ENCODE measurements at regions of chr19 and their contacts with region 1.

Region 1: GRCh38 chr19:8580710-8581281 is 3.6 kb upstream of the MYO1F start:
- DNase-seq: peak; percentile 81
- ATAC-seq: peak; percentile 73
- H3K4me3 Mint-ChIP-seq: no peak overlapping the region
- H3K27ac Mint-ChIP-seq: no peak overlapping the region
- H3K4me1 Mint-ChIP-seq: peaks cover 35% of the 10 kb centered on the region
- H3K27me3 Mint-ChIP-seq: peaks cover 2% of the 10 kb centered on the region
- CTCF ChIP-seq: peak; percentile 95

Region 2: DNA sequence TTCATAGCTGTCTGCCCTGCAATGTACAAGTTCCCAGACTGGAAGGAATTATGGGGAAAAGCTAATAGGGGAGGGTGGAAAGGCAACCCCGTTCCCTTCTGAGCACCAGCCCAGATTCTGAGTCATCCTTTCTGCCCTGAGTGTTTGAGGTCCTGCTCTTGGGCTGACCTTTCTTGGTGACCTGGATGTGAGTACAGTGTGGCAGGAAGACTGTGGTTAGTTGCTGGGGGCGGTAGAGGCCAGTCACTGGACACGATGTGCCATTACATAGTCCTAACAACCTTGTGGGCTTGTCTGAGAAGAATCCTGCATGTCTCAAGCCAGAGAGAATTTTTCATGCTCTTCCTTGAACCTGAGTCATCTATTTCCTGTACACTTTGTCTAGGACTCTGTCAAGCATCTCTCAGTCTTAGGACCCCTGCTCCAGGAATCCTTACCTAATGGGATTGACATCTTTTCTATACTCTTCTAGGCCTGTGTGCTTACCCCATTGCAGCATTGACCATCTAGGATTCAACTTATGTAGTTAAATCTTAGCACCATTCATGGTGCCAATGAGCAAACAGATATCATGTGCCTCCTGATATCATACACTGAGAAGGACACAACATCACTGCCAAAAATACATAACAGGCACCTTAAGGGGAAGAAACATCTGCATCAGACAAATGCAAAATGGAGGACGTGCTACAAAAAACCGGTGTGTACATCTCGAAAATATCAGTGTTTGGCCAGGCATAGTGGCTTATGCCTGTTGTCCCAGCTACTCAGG is 225.0 kb before region 1 on chr19:
- CTCF ChIA-PET with region 1: interaction called, 18 read pairs
- POLR2A ChIA-PET with region 1: no interaction called
- intact Hi-C with region 1: loop called (anchors 2 kb)
- DNase-seq: no peak
- ATAC-seq: no peak
- H3K4me3 Mint-ChIP-seq: no peak overlapping the region
- H3K27ac Mint-ChIP-seq: no peak overlapping the region
- H3K4me1 Mint-ChIP-seq: peaks cover 3% of the 10 kb centered on the region
- H3K27me3 Mint-ChIP-seq: peaks cover 14% of the 10 kb centered on the region
- CTCF ChIP-seq: no peak

Region 3: GRCh38 chr19:8526345-8527067 is 54.3 kb before region 1 on chr19:
- CTCF ChIA-PET with region 1: interaction called, 4 read pairs
- POLR2A ChIA-PET with region 1: interaction called, 12 read pairs
- intact Hi-C with region 1: no loop called
- DNase-seq: peak; percentile 43
- ATAC-seq: peak; percentile 55
- H3K4me3 Mint-ChIP-seq: peak overlapping the region; percentile 9
- H3K27ac Mint-ChIP-seq: no peak overlapping the region
- H3K4me1 Mint-ChIP-seq: no peaks in the 10 kb centered on the region
- H3K27me3 Mint-ChIP-seq: no peaks in the 10 kb centered on the region
- CTCF ChIP-seq: no peak

Region 4: DNA sequence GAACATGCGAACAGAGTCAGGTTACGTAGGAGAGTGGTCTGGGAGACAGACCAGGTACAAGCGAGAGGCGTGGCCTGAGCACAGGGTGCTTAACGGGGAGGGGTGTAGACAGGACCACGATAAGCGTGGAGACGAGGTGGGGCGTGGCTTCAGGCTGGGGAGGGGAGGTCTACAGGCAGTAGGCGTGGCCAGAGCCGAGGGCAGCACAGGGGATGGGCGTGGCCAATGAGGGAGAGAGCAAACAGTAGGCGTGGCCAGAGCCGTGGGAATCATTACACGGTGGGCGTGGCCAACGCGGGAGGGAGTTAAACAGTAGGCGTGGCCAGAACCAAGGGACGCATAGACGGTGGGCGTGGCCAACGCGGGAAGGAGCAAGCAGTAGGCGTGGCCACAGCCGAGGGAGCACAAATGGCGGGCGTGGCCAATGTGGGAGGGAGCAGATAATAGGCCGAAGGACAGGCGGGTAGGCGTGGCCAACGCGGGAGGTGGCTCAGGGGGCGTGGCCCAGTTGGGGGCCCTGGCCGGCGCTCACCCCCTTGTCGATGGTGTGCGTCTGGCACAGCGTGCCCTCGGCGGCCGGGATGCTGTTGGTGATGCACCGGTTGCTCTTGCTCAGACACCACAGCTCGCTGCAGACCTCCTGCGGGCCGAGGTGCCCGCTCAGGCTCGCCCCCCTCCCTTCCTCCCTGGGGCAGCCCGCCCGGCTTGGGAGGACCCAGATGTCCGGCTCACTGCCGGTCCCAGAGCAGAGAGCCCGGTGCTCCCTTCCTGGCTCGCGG is 11.6 kb after region 1 on chr19:
- CTCF ChIA-PET with region 1: interaction called, 28 read pairs
- POLR2A ChIA-PET with region 1: interaction called, 3 read pairs
- intact Hi-C with region 1: no loop called
- DNase-seq: peak; percentile 51
- ATAC-seq: peak; percentile 86
- H3K4me3 Mint-ChIP-seq: peak overlapping the region; percentile 66
- H3K27ac Mint-ChIP-seq: no peak overlapping the region
- H3K4me1 Mint-ChIP-seq: peaks cover 15% of the 10 kb centered on the region
- H3K27me3 Mint-ChIP-seq: peaks cover 43% of the 10 kb centered on the region
- CTCF ChIP-seq: no peak

Region 5: DNA sequence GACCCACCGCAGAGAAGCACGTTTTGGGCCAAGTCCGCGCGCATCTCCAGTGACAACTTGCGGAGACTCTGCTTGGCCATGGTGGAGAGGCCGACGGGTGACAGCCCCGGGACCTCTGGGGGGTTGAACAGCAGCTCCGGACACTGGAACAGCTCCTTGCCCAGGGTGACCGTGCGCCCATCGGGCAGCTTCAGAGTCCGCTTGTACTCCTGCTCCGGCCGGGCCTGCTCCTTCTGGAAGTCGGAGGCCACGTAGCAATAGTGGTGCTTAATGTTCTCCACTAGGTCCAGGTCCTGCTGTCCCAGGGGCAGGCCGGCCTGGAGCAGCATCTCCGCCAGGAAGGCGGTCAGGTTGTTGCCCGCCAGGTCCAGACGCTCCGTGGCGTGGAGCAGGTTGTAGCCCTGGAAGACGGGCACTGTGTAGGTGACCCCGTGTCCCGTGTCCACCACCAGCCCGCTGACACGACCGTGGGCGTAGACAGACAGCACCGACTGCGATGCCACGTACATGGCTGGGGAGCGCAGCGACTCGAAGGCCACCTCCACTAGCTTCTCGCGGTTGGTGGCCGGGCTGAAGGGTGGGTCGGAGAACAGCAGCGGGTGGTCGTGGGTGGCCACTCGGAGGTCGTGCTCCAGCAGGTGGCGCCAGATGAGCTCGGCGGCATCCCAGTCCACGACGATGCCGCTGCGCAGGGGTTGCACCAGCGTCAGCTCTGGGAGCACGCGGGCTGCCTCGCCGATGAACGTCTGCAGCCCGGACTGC is 117.1 kb after region 1 on chr19:
- CTCF ChIA-PET with region 1: interaction called, 4 read pairs
- POLR2A ChIA-PET with region 1: no interaction called
- intact Hi-C with region 1: loop called (anchors 1 kb)
- DNase-seq: no peak
- ATAC-seq: no peak
- H3K4me3 Mint-ChIP-seq: no peak overlapping the region
- H3K27ac Mint-ChIP-seq: no peak overlapping the region
- H3K4me1 Mint-ChIP-seq: peaks cover 4% of the 10 kb centered on the region
- H3K27me3 Mint-ChIP-seq: peaks cover 36% of the 10 kb centered on the region
- CTCF ChIP-seq: no peak

Region 6: GRCh38 chr19:9054765-9055164 is 474.0 kb after region 1 on chr19:
- CTCF ChIA-PET with region 1: no interaction called
- POLR2A ChIA-PET with region 1: no interaction called
- intact Hi-C with region 1: no loop called
- DNase-seq: no peak
- ATAC-seq: no peak
- H3K4me3 Mint-ChIP-seq: no peak overlapping the region
- H3K27ac Mint-ChIP-seq: no peak overlapping the region
- H3K4me1 Mint-ChIP-seq: no peaks in the 10 kb centered on the region
- H3K27me3 Mint-ChIP-seq: no peaks in the 10 kb centered on the region
- CTCF ChIP-seq: no peak